T-cell (primary cell): ENCODE measurements at regions of chrX and their contacts with region 1.

Region 1: GRCh38 chrX:23822397-23822796 is 39.4 kb downstream of the SAT1 start:
- DNase-seq: no peak
- ATAC-seq: no peak
- H3K4me3 ChIP-seq: no peak overlapping the region
- H3K4me3 Mint-ChIP-seq: no peak overlapping the region
- H3K27ac ChIP-seq: no peak overlapping the region
- H3K27ac Mint-ChIP-seq: no peak overlapping the region
- H3K4me1 ChIP-seq: no peaks in the 10 kb centered on the region
- H3K4me1 Mint-ChIP-seq: no peaks in the 10 kb centered on the region
- H3K27me3 ChIP-seq: no peaks in the 10 kb centered on the region
- H3K27me3 Mint-ChIP-seq: peaks cover 0 to 19% of the 10 kb centered on the region in 2 donors

Region 2: DNA sequence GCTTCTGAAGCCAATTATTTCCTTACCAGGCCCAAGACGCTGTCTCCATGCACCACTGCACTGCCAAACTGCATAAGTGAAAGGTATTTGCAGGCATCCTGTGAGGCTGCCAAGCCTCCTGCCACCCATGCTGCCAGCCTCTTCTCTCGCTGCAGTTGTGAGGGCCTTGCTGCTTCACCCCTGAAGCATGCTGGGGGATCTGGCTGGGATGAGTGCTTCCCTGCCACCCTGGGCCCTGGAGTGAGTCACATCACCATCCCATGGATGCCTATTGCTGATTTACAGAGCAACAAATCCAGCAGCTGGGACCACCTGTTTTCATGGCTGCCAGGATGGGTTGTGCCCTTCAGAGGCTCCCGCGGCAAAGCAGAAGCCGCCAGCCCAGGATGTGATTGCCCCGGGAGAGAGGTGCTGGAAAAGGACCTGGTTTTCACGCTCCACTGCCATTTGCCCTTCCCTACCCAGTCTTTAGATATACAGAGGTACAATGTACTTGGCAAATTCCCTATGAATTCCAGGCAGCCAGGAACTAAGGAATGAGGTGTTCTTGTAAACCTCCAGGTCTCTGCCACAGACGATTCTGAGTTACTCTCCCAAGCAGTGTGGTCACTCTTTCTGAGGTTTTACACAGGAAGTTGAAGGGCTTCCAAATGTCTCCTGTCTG is 529.3 kb before region 1 on chrX:
- CTCF ChIA-PET with region 1: no interaction called
- POLR2A ChIA-PET with region 1: no interaction called
- DNase-seq: no peak
- ATAC-seq: no peak
- H3K4me3 ChIP-seq: no peak overlapping the region
- H3K4me3 Mint-ChIP-seq: no peak overlapping the region
- H3K27ac ChIP-seq: no peak overlapping the region
- H3K27ac Mint-ChIP-seq: no peak overlapping the region
- H3K4me1 ChIP-seq: no peaks in the 10 kb centered on the region
- H3K4me1 Mint-ChIP-seq: no peaks in the 10 kb centered on the region
- H3K27me3 ChIP-seq: no peaks in the 10 kb centered on the region
- H3K27me3 Mint-ChIP-seq: no peaks in the 10 kb centered on the region

Region 3: GRCh38 chrX:23803931-23804381 is 18.4 kb before region 1 on chrX:
- CTCF ChIA-PET with region 1: no interaction called
- POLR2A ChIA-PET with region 1: no interaction called
- DNase-seq: no peak
- ATAC-seq: no peak
- H3K4me3 ChIP-seq: no peak overlapping the region
- H3K4me3 Mint-ChIP-seq: no peak overlapping the region
- H3K27ac ChIP-seq: no peak overlapping the region
- H3K27ac Mint-ChIP-seq: no peak overlapping the region
- H3K4me1 ChIP-seq: no peaks in the 10 kb centered on the region
- H3K4me1 Mint-ChIP-seq: peaks cover 0 to 2% (median 0%) of the 10 kb centered on the region in 3 donors
- H3K27me3 ChIP-seq: no peaks in the 10 kb centered on the region
- H3K27me3 Mint-ChIP-seq: peaks cover 0 to 4% of the 10 kb centered on the region in 2 donors

Region 4: DNA sequence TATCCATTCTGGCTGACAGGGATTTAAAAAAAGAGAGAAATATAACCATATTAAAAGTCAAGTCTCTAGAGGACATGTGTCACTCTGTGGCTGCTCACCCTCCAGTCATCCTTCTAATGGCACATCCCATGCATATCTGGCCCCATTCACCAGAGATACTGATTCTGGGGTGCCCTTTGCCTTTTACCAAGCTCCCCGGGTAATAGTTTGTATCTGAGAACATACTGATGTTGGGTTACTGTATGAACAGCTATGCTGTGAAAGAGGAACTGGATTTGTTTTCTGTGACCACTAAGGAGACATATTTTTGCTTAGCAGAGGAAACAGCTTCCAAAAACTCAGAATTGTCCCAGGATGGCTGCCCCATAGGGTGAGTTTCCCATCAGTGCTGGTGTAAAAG is 16.6 kb after region 1 on chrX:
- CTCF ChIA-PET with region 1: interaction called in 1 of 2 experiments, 5 read pairs
- POLR2A ChIA-PET with region 1: interaction called in 1 of 2 experiments, 13 read pairs
- DNase-seq: no peak
- ATAC-seq: no peak
- H3K4me3 ChIP-seq: no peak overlapping the region
- H3K4me3 Mint-ChIP-seq: no peak overlapping the region
- H3K27ac ChIP-seq: no peak overlapping the region
- H3K27ac Mint-ChIP-seq: no peak overlapping the region
- H3K4me1 ChIP-seq: no peaks in the 10 kb centered on the region
- H3K4me1 Mint-ChIP-seq: no peaks in the 10 kb centered on the region
- H3K27me3 ChIP-seq: no peaks in the 10 kb centered on the region
- H3K27me3 Mint-ChIP-seq: peaks cover 0 to 5% of the 10 kb centered on the region in 2 donors

Region 5: DNA sequence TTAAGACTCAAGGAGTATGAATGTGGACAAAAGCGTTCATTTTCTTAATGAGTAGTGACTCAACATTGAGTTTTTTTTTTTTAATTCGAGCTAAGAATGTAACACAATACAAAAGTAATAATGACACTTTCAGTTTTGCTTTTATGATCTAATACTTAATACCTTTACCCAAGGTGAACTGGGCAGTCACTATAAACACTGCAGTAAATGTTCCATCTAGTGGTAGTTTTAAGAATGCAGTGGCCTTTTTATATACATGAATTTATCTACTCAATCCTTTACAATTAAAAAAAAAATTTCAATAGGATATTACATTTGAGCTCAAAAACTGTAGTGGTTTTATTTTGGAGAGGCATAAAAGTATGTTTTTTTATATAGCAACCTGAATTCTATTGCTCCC is 676.6 kb after region 1 on chrX:
- CTCF ChIA-PET with region 1: no interaction called
- POLR2A ChIA-PET with region 1: no interaction called
- DNase-seq: peak in 1 of 35 experiments; percentile 65
- ATAC-seq: peak; percentile 45 to 85 (median 65)
- H3K4me3 ChIP-seq: no peak overlapping the region
- H3K4me3 Mint-ChIP-seq: peak overlapping the region in 2 of 3 donors; percentile 17 to 40
- H3K27ac ChIP-seq: peak overlapping the region; percentile 67
- H3K27ac Mint-ChIP-seq: peak overlapping the region; percentile 69 to 82
- H3K4me1 ChIP-seq: peaks cover 0 to 8% of the 10 kb centered on the region in 2 experiments
- H3K4me1 Mint-ChIP-seq: peaks cover 26 to 30% (median 27%) of the 10 kb centered on the region in 3 donors
- H3K27me3 ChIP-seq: no peaks in the 10 kb centered on the region
- H3K27me3 Mint-ChIP-seq: no peaks in the 10 kb centered on the region

Region 6: DNA sequence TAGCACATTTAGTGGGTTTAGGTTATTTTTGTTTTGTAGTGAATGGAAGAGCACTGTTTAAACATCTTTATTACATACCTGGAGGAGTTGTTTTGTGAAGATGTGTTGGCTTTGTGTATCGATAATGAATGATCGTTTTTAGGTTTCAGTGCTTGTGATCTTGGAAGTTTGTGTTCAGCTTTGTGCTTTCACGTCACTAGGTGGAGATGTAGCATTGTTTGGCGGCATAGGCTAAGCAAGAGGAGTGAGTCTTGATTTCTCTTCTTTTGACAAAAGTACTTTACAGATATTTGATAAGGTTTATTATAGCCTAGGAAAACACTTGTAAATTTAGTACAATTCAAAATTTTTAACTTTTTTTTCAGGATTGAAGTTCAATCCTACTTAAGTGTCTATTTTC is 693.0 kb after region 1 on chrX:
- CTCF ChIA-PET with region 1: interaction called in 1 of 2 experiments, 14 read pairs
- POLR2A ChIA-PET with region 1: no interaction called
- DNase-seq: no peak
- ATAC-seq: no peak
- H3K4me3 ChIP-seq: no peak overlapping the region
- H3K4me3 Mint-ChIP-seq: no peak overlapping the region
- H3K27ac ChIP-seq: no peak overlapping the region
- H3K27ac Mint-ChIP-seq: no peak overlapping the region
- H3K4me1 ChIP-seq: no peaks in the 10 kb centered on the region
- H3K4me1 Mint-ChIP-seq: peaks cover 0 to 5% (median 0%) of the 10 kb centered on the region in 3 donors
- H3K27me3 ChIP-seq: no peaks in the 10 kb centered on the region
- H3K27me3 Mint-ChIP-seq: peaks cover 0 to 8% of the 10 kb centered on the region in 2 donors